CD4-positive, alpha-beta T cell (primary cell): ENCODE measurements at regions of chr15 and their contacts with region 1.

Region 1: GRCh38 chr15:52227456-52227855 is 36.3 kb upstream of the GNB5 start:
- DNase-seq: peak; percentile 40 to 88 (median 61)
- ATAC-seq: peak; percentile 99
- H3K4me3 ChIP-seq: no peak overlapping the region
- H3K4me3 Mint-ChIP-seq: no peak overlapping the region
- H3K27ac ChIP-seq: no peak overlapping the region
- H3K27ac Mint-ChIP-seq: no peak overlapping the region
- H3K4me1 ChIP-seq: peaks cover 11% of the 10 kb centered on the region
- H3K4me1 Mint-ChIP-seq: peaks cover 22% of the 10 kb centered on the region
- H3K27me3 ChIP-seq: no peaks in the 10 kb centered on the region
- H3K27me3 Mint-ChIP-seq: no peaks in the 10 kb centered on the region
- CTCF ChIP-seq: peak; percentile 66

Region 2: GRCh38 chr15:51672155-51672687 is 555.2 kb before region 1 on chr15:
- CTCF ChIA-PET with region 1: no interaction called
- POLR2A ChIA-PET with region 1: no interaction called
- intact Hi-C with region 1: no loop called
- DNase-seq: peak in 2 of 14 experiments; percentile 26 to 34
- ATAC-seq: no peak
- H3K4me3 ChIP-seq: no peak overlapping the region
- H3K4me3 Mint-ChIP-seq: no peak overlapping the region
- H3K27ac ChIP-seq: no peak overlapping the region
- H3K27ac Mint-ChIP-seq: no peak overlapping the region
- H3K4me1 ChIP-seq: no peaks in the 10 kb centered on the region
- H3K4me1 Mint-ChIP-seq: no peaks in the 10 kb centered on the region
- H3K27me3 ChIP-seq: peaks cover 4 to 11% of the 10 kb centered on the region in 2 experiments
- H3K27me3 Mint-ChIP-seq: peaks cover 19% of the 10 kb centered on the region
- CTCF ChIP-seq: no peak

Region 3: GRCh38 chr15:51869070-51869425 is 358.4 kb before region 1 on chr15:
- CTCF ChIA-PET with region 1: no interaction called
- POLR2A ChIA-PET with region 1: no interaction called
- intact Hi-C with region 1: no loop called
- DNase-seq: no peak
- ATAC-seq: no peak
- H3K4me3 ChIP-seq: no peak overlapping the region
- H3K4me3 Mint-ChIP-seq: no peak overlapping the region
- H3K27ac ChIP-seq: no peak overlapping the region
- H3K27ac Mint-ChIP-seq: no peak overlapping the region
- H3K4me1 ChIP-seq: no peaks in the 10 kb centered on the region
- H3K4me1 Mint-ChIP-seq: peaks cover 6% of the 10 kb centered on the region
- H3K27me3 ChIP-seq: no peaks in the 10 kb centered on the region
- H3K27me3 Mint-ChIP-seq: no peaks in the 10 kb centered on the region
- CTCF ChIP-seq: no peak

Region 4: DNA sequence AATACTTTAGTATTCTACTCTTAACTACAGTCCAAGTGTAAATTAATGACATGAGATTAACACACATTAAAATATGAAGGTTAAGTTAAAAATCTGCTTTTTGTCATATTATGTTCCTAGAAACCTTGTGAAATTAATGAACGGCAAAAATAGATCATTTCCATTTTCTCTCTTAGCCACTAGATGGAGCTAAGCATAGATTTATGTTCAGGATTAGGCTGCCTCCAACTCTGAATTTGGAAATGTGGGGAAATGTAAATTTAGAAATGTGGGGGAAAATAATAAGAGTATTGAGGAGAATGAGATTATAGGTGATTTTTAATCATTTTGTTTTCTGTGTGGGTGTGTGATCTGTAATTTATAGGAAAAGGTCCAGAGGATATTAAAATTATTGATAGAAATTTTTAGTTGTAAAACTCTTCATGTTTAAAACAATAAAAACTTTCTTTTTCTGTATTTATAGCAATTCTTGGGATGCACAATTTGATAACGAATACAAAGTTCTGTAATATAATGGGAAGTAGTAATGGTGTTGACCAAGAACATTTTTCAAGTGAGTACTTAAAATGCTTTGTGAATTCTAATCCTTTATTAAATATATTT is 338.8 kb before region 1 on chr15:
- CTCF ChIA-PET with region 1: no interaction called
- POLR2A ChIA-PET with region 1: no interaction called
- intact Hi-C with region 1: loop called in 1 of 2 experiments (anchors 5 kb)
- DNase-seq: peak in 3 of 14 experiments; percentile 27 to 38 (median 33)
- ATAC-seq: peak; percentile 39
- H3K4me3 ChIP-seq: no peak overlapping the region
- H3K4me3 Mint-ChIP-seq: no peak overlapping the region
- H3K27ac ChIP-seq: no peak overlapping the region
- H3K27ac Mint-ChIP-seq: no peak overlapping the region
- H3K4me1 ChIP-seq: peaks cover 3% of the 10 kb centered on the region
- H3K4me1 Mint-ChIP-seq: peaks cover 5% of the 10 kb centered on the region
- H3K27me3 ChIP-seq: no peaks in the 10 kb centered on the region
- H3K27me3 Mint-ChIP-seq: no peaks in the 10 kb centered on the region
- CTCF ChIP-seq: peak; percentile 94

Region 5: GRCh38 chr15:52139599-52140491 is 87.6 kb before region 1 on chr15:
- CTCF ChIA-PET with region 1: no interaction called
- POLR2A ChIA-PET with region 1: no interaction called
- intact Hi-C with region 1: loop called in 1 of 2 experiments (anchors 5 kb)
- DNase-seq: peak; percentile 30 to 76 (median 54)
- ATAC-seq: peak; percentile 43
- H3K4me3 ChIP-seq: no peak overlapping the region
- H3K4me3 Mint-ChIP-seq: no peak overlapping the region
- H3K27ac ChIP-seq: no peak overlapping the region
- H3K27ac Mint-ChIP-seq: peak overlapping the region; percentile 49
- H3K4me1 ChIP-seq: peaks cover 27% of the 10 kb centered on the region
- H3K4me1 Mint-ChIP-seq: peaks cover 28% of the 10 kb centered on the region
- H3K27me3 ChIP-seq: no peaks in the 10 kb centered on the region
- H3K27me3 Mint-ChIP-seq: no peaks in the 10 kb centered on the region
- CTCF ChIP-seq: peak; percentile 74

Region 6: DNA sequence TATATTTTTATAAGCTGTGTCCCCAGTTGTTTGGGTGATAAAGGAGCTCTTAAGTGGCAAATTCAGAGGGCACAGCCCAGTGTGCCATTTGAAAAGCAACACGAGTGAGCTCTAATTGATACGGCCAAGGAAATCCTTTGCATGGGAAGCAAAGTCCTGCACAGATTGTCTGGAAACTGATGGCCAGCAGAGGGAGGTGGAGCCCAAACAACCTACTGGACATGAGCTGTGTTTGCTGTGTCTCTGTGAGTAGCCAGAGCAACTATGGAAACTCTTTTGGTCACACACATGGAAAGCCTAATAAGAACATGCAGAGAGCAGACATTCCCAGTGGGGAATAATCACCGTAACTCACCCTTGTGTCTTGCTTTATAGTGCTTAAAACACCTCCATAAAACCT is 538.3 kb after region 1 on chr15:
- CTCF ChIA-PET with region 1: no interaction called
- POLR2A ChIA-PET with region 1: no interaction called
- intact Hi-C with region 1: no loop called
- DNase-seq: no peak
- ATAC-seq: no peak
- H3K4me3 ChIP-seq: no peak overlapping the region
- H3K4me3 Mint-ChIP-seq: no peak overlapping the region
- H3K27ac ChIP-seq: no peak overlapping the region
- H3K27ac Mint-ChIP-seq: no peak overlapping the region
- H3K4me1 ChIP-seq: no peaks in the 10 kb centered on the region
- H3K4me1 Mint-ChIP-seq: no peaks in the 10 kb centered on the region
- H3K27me3 ChIP-seq: peaks cover 20 to 21% of the 10 kb centered on the region in 2 experiments
- H3K27me3 Mint-ChIP-seq: peaks cover 58% of the 10 kb centered on the region
- CTCF ChIP-seq: no peak